CD8-positive, alpha-beta T cell (primary cell): ENCODE measurements at regions of chr5 and their contacts with region 1.

Region 1: DNA sequence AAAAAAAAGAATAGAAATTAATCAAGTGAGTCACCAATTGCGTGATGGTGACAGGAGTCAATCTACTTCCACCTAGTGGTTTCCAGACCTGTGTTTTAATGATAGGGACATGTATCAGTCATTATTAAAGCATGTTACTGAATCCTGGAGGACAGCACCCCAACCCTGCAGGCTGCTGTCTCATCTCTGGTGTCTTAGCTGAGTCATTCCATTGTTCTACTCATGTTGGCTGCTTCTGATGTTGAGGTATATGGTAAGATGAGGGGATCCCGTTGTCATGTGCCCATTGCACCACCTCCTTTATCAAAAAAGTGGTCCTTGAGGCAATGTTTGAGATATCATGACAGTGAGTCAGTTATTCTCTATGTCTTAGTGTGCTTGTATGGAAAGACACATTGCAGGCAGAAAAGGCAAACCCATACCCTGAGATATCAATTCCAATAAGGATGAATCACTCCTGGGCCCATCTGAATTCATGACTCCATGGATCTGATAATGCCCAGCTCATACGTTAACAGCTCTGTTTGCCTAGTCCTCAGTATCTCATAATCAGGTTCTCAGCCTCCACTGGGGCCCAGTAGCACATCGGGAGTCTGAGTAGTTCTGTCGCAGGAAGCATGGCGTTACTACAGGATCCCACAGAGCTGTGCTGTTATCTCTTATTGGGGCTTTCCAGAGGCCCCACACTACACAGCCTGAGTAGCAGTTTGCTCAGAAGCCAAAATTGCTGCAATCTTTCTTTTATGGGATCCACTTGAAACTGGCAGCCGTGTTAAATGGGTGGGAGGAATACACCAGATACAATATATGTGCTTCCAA is 31.2 kb downstream of the HMGCS1 start:
- DNase-seq: no peak
- ATAC-seq: no peak
- H3K4me3 ChIP-seq: no peak overlapping the region
- H3K4me3 Mint-ChIP-seq: no peak overlapping the region
- H3K27ac ChIP-seq: no peak overlapping the region
- H3K27ac Mint-ChIP-seq: no peak overlapping the region
- H3K4me1 ChIP-seq: no peaks in the 10 kb centered on the region
- H3K4me1 Mint-ChIP-seq: no peaks in the 10 kb centered on the region
- H3K27me3 ChIP-seq: no peaks in the 10 kb centered on the region
- H3K27me3 Mint-ChIP-seq: peaks cover 4% of the 10 kb centered on the region
- CTCF ChIP-seq: no peak

Region 2: GRCh38 chr5:43171914-43172313 is 110.1 kb before region 1 on chr5:
- CTCF ChIA-PET with region 1: no interaction called
- POLR2A ChIA-PET with region 1: no interaction called
- intact Hi-C with region 1: loop called in 1 of 2 experiments (anchors 10 kb)
- DNase-seq: no peak
- ATAC-seq: no peak
- H3K4me3 ChIP-seq: no peak overlapping the region
- H3K4me3 Mint-ChIP-seq: no peak overlapping the region
- H3K27ac ChIP-seq: no peak overlapping the region
- H3K27ac Mint-ChIP-seq: no peak overlapping the region
- H3K4me1 ChIP-seq: no peaks in the 10 kb centered on the region
- H3K4me1 Mint-ChIP-seq: peaks cover 5% of the 10 kb centered on the region
- H3K27me3 ChIP-seq: no peaks in the 10 kb centered on the region
- H3K27me3 Mint-ChIP-seq: no peaks in the 10 kb centered on the region
- CTCF ChIP-seq: no peak